Natural killer cell (primary cell): ENCODE measurements at regions of chr10 and their contacts with region 1.

Region 1: GRCh38 chr10:69839696-69840345 is 38.1 kb downstream of the COL13A1 start:
- DNase-seq: no peak
- ATAC-seq: peak in 2 of 3 donors; percentile 34 to 56
- H3K4me3 ChIP-seq: no peak overlapping the region
- H3K4me3 Mint-ChIP-seq: peak overlapping the region; percentile 54
- H3K27ac ChIP-seq: no peak overlapping the region
- H3K27ac Mint-ChIP-seq: peak overlapping the region; percentile 47 to 73
- H3K4me1 ChIP-seq: peaks cover 38% of the 10 kb centered on the region
- H3K4me1 Mint-ChIP-seq: peaks cover 48 to 69% of the 10 kb centered on the region in 2 donors
- H3K27me3 ChIP-seq: no peaks in the 10 kb centered on the region
- H3K27me3 Mint-ChIP-seq: no peaks in the 10 kb centered on the region
- CTCF ChIP-seq: no peak

Region 2: GRCh38 chr10:69800109-69800508 is 39.7 kb before region 1 on chr10:
- intact Hi-C with region 1: loop called (anchors 5 kb)
- DNase-seq: peak in 1 of 2 donors; percentile 16
- ATAC-seq: no peak
- H3K4me3 ChIP-seq: no peak overlapping the region
- H3K4me3 Mint-ChIP-seq: no peak overlapping the region
- H3K27ac ChIP-seq: no peak overlapping the region
- H3K27ac Mint-ChIP-seq: no peak overlapping the region
- H3K4me1 ChIP-seq: peaks cover 19% of the 10 kb centered on the region
- H3K4me1 Mint-ChIP-seq: peaks cover 26 to 42% of the 10 kb centered on the region in 2 donors
- H3K27me3 ChIP-seq: peaks cover 22% of the 10 kb centered on the region
- H3K27me3 Mint-ChIP-seq: peaks cover 7 to 15% of the 10 kb centered on the region in 2 donors
- CTCF ChIP-seq: no peak

Region 3: DNA sequence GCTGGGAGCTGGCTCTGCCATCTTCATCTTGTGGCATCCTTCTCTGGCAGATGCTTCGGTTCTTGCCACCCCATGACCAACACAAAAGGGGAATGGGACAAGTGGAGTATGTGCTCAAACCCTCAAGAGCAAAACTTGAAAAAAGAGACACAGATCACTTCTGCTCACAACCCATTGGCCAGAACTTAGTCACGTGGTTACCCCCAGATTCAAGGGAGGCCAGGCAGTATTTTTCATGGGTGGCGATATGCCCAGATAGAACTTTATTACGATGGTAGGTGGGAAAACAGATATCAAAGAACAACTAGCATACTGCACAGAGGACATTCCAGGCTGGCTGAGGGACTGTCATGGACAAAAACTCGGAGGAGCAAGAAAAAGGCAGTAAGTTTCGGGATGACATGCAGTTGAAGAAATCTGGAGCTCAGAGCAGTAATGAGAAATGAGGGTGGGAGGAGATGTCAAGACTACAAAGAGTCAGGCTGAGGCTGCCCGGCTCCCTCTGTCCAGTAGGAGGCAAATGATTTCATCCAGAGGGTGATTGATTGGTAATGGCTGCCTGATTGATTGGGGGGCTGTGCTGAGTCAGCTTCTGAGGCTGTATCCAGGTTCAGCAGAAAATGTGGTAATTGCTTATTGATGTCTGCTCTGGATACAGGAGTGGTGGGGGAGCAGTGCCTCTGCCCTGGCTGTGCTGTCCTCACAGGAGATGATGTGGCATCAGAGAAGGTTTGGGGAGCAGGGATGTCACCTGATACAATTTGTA is 12.8 kb before region 1 on chr10:
- intact Hi-C with region 1: loop called (anchors 2 kb)
- DNase-seq: no peak
- ATAC-seq: no peak
- H3K4me3 ChIP-seq: no peak overlapping the region
- H3K4me3 Mint-ChIP-seq: no peak overlapping the region
- H3K27ac ChIP-seq: no peak overlapping the region
- H3K27ac Mint-ChIP-seq: no peak overlapping the region
- H3K4me1 ChIP-seq: peaks cover 60% of the 10 kb centered on the region
- H3K4me1 Mint-ChIP-seq: peaks cover 72 to 86% of the 10 kb centered on the region in 2 donors
- H3K27me3 ChIP-seq: no peaks in the 10 kb centered on the region
- H3K27me3 Mint-ChIP-seq: peaks cover 0 to 4% of the 10 kb centered on the region in 2 donors
- CTCF ChIP-seq: no peak